H1 (cell line): ENCODE measurements at regions of chr6 and their contacts with region 1.

Region 1: DNA sequence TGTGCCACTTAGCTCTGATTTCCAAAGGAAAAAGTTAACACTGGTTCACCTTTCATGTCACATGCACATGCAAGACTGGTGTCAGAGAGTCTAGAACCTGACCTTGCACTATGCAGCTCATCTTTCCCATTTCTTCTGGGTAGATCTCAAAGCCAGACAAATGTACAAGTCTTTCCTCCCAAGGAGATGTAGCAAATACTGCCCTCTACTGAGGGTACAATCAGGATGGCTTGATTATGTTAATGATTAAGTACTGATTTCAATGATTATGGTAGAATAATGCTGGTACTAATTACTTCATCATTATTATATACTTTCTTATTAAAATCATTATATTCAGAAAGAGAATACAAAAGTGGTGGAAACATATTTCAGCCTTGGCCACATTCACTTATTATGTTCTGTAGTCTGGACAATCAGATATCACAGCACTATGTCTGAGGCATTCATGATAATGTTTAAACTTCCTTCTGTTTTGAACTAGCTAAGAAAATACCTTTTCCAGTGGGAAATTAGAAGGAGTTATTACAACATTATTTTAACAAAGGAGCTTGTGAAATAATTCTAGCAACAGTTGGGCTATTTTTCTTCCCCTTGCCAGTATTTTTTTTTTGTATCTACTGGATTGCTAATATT is 68.5 kb upstream of the FOXO3 start:
- DNase-seq: no peak
- H3K4me3 ChIP-seq: no peak overlapping the region
- H3K27ac ChIP-seq: no peak overlapping the region
- H3K4me1 ChIP-seq: no peaks in the 10 kb centered on the region
- H3K27me3 ChIP-seq: no peaks in the 10 kb centered on the region
- CTCF ChIP-seq: peak in 2 of 3 experiments; percentile 39 to 61; a peak in 2 of 4 replicates
- EP300 ChIP-seq: no peak
- POLR2A ChIP-seq: no peak
- RAD21 ChIP-seq: peak; percentile 68 to 70

Region 2: GRCh38 chr6:108174371-108175175 is 317.7 kb before region 1 on chr6:
- CTCF ChIA-PET with region 1: interaction called, 38 read pairs
- POLR2A ChIA-PET with region 1: no interaction called
- DNase-seq: peak in 1 of 2 experiments; percentile 82
- H3K4me3 ChIP-seq: peak overlapping the region in 1 of 4 experiments; percentile 53; a peak in 1 of 8 replicates
- H3K27ac ChIP-seq: no peak overlapping the region
- H3K4me1 ChIP-seq: peaks cover 0 to 26% (median 20%) of the 10 kb centered on the region in 4 experiments; a peak in 6 of 7 replicates
- H3K27me3 ChIP-seq: peaks cover 80 to 95% (median 86%) of the 10 kb centered on the region in 4 experiments
- CTCF ChIP-seq: no peak
- EP300 ChIP-seq: no peak
- POLR2A ChIP-seq: no peak
- RAD21 ChIP-seq: 0 out of 4 replicates have a peak, but pooled peaks of 1 of the 2 experiments have one; percentile 2

Region 3: DNA sequence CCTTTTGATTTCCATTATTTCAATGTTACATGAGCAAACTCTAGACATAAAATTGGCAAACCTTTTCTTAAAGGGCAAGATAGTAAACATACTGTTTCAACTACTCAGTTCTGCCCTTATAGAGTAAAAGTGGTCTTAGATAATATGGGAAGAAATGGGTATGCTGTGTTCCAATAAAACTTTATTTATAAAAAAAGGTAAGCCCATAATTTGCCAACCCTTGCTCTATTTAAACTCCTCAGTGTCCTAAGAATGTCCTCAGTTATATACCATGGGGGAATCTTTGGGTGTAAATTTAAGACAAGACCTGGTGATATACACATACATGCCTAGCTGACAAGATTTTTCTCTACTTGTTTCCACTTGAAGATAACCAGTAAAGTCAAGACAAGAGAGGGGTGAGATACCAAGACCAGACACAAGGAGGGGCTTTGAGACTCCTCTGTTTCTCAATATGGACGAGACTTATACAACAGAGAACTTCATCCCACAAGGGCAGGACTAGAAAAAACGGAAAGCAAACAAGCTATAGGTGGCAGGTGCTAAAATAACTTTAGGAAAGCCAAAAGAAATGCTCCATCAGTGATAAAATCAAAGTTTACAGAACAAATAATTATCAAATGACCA is 241.9 kb before region 1 on chr6:
- CTCF ChIA-PET with region 1: interaction called, 52 read pairs
- POLR2A ChIA-PET with region 1: no interaction called
- DNase-seq: no peak
- H3K4me3 ChIP-seq: no peak overlapping the region
- H3K27ac ChIP-seq: no peak overlapping the region
- H3K4me1 ChIP-seq: no peaks in the 10 kb centered on the region
- H3K27me3 ChIP-seq: no peaks in the 10 kb centered on the region
- CTCF ChIP-seq: peak in 2 of 3 experiments; percentile 62 to 71; a peak in 3 of 4 replicates
- EP300 ChIP-seq: no peak
- POLR2A ChIP-seq: no peak
- RAD21 ChIP-seq: peak; percentile 71 to 78

Region 4: GRCh38 chr6:108383984-108384383 is 108.3 kb before region 1 on chr6:
- CTCF ChIA-PET with region 1: interaction called, 10 read pairs
- POLR2A ChIA-PET with region 1: no interaction called
- DNase-seq: no peak
- H3K4me3 ChIP-seq: no peak overlapping the region
- H3K27ac ChIP-seq: no peak overlapping the region
- H3K4me1 ChIP-seq: no peaks in the 10 kb centered on the region
- H3K27me3 ChIP-seq: no peaks in the 10 kb centered on the region
- CTCF ChIP-seq: no peak
- EP300 ChIP-seq: no peak
- POLR2A ChIP-seq: no peak
- RAD21 ChIP-seq: no peak

Region 5: GRCh38 chr6:108502832-108503231 is 10.6 kb after region 1 on chr6:
- CTCF ChIA-PET with region 1: interaction called, 30 read pairs
- POLR2A ChIA-PET with region 1: no interaction called
- DNase-seq: no peak
- H3K4me3 ChIP-seq: no peak overlapping the region
- H3K27ac ChIP-seq: no peak overlapping the region
- H3K4me1 ChIP-seq: no peaks in the 10 kb centered on the region
- H3K27me3 ChIP-seq: no peaks in the 10 kb centered on the region
- CTCF ChIP-seq: no peak
- EP300 ChIP-seq: no peak
- POLR2A ChIP-seq: no peak
- RAD21 ChIP-seq: no peak